AG04449 (cell line): ENCODE measurements at regions of chr6 and their contacts with region 1.

Region 1: GRCh38 chr6:114747987-114748630 is 405.3 kb upstream of the HS3ST5 start:
- DNase-seq: peak; percentile 24
- H3K4me3 ChIP-seq: no peak overlapping the region
- CTCF ChIP-seq: peak; percentile 47

Region 2: DNA sequence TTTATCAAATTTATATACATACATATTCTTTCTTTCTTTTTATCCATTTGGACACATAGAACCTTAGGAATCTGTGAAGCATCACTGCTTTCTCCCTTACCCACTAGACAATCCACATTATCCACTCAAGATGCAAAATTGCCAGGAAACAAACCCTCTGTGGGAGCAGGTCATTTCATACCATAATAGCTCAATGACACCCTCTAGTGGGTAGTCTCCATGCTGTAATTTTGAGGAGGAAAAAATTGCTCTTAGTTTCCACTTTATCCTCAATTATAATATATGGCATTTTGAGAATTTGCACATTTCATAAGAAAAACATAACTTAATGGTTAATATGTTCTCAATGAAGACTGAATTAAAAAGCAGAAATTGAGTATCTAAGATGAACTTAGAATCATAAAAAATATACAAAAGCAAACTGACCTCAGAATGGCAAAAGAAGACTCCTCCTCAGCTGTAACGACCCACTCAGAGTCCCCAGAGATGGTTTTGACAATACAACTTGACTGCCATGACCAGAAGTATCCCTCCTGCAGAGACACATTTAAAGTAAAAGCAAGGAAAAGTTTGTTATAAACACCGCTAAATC is 1148.5 kb after region 1 on chr6:
- CTCF ChIA-PET with region 1: interaction called, 10 read pairs
- POLR2A ChIA-PET with region 1: no interaction called
- DNase-seq: no peak
- H3K4me3 ChIP-seq: no peak overlapping the region
- CTCF ChIP-seq: peak; percentile 70